ENCODE measurements at regions of chr10 and their contacts with region 1.

Region 1: DNA sequence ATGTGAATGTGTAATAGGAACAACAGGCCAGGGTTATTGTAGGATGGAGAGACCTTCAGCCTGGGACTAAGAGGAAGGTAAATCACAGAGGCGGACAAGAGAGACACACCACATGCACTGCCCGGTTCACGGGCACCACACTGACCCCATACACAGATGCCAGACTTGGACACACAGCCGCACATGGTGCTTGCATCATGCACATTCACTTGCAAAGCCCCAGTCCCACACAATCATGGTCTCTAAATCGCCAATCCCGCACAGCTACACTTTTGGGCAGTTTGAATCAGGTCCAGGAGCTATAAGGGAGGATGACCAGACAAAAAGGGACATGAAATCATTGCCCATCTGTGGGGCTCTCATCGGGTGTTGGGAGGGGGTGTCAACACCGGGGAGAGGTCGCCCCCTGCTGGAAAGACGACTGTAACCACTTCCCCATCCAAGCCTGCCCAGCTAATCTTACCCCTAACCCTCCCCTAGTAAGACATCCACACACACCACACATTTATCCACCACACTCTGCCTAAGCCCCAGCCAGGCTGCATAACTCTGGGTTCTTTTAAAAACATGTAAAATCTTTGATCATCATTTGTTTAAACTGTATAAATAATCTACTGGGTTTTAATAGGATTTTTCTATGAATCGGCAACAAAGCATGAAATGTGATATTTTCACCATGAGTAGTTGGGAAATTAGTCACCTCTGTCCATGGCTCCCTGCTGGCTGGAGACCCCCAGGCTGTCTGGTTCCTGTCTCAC is 40.5 kb upstream of the SLF2 start:
- DNase-seq: peak; percentile 68
- H3K4me3 ChIP-seq: no peak overlapping the region
- H3K27ac ChIP-seq: no peak overlapping the region
- H3K4me1 ChIP-seq: peaks cover under 1% of the 10 kb centered on the region
- H3K27me3 ChIP-seq: peaks cover 3% of the 10 kb centered on the region
- CTCF ChIP-seq: peak; percentile 87

Region 2: DNA sequence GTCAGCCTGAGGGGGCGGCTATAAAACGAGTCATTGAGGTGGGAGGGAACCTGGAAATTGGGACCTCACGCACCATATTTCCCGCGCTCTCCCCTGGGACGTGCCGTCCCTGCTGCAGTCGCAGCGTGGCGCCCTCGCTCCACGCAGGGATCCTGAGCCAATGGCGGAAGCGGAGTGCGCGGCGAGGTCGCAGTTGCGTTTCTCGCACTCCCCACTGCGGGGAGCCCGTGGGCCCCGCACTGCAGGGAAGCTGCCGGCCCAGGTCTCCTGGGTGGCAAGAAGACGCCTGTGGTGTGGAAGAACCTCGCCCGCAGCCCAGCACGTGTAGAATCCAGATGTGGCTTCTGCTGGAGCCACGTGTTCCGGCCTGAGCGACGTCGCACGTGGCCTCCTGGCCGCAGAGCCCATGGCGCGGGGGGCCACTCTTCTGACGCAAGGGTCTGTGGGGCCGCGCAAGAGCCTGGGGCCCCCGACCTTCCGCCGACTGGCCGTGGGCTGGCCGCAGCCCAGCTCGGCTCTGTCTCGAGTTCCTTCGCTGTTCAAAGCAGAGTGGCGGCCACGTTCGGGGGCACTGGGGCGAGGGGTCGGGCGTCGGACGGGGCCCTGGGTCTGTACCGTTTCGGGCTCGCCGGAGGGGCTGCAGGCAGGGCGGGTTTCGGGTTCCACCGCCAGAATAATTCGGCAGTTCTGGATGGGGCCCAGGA is 310.1 kb before region 1 on chr10:
- CTCF ChIA-PET with region 1: interaction called, 11 read pairs
- POLR2A ChIA-PET with region 1: no interaction called
- intact Hi-C with region 1: no loop called
- DNase-seq: peak; percentile 89
- H3K4me3 ChIP-seq: peak overlapping the region; percentile 15
- H3K27ac ChIP-seq: no peak overlapping the region
- H3K4me1 ChIP-seq: peaks cover 10% of the 10 kb centered on the region
- H3K27me3 ChIP-seq: peaks cover 15% of the 10 kb centered on the region
- CTCF ChIP-seq: peak; percentile 99

Region 3: DNA sequence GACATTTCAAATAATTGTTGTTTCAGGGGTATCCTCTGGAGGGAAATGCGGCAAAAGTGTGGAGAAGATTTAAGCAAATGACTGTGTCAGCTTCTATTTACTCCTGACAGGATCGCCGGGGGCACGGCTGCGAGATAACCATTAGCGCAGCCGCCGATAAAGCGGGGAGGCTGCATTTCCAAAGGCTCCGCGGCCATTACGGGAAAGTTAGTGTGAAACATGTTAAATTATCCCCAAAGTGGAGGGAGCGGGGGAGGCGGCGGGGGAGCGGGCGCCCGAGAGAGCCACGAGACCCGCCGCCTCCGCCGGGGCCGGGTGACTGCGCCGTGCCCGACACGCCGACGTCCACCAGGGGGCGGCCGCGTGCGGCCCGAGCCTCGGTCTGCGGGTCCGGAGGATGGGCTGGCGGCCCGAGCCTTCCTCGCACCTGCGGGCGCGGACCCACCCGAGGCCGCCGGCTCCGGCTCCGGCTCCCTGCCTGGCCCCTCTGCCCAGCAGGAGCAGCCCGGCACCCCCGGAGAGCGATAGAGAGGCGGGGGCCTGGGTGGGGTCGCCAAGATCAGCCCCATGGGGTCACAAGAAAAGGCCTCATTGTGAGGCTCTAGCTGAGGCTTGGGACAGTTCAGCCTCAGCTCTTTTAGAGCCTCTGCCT is 201.3 kb before region 1 on chr10:
- CTCF ChIA-PET with region 1: no interaction called
- POLR2A ChIA-PET with region 1: no interaction called
- intact Hi-C with region 1: loop called (anchors 5 kb)
- DNase-seq: no peak
- H3K4me3 ChIP-seq: no peak overlapping the region
- H3K27ac ChIP-seq: no peak overlapping the region
- H3K4me1 ChIP-seq: peaks cover 9% of the 10 kb centered on the region
- H3K27me3 ChIP-seq: peaks cover 42% of the 10 kb centered on the region
- CTCF ChIP-seq: peak; percentile 57

Region 4: GRCh38 chr10:100743626-100744135 is 128.5 kb before region 1 on chr10:
- CTCF ChIA-PET with region 1: interaction called, 9 read pairs
- POLR2A ChIA-PET with region 1: no interaction called
- intact Hi-C with region 1: loop called (anchors 5 kb)
- DNase-seq: peak; percentile 78
- H3K4me3 ChIP-seq: peak overlapping the region; percentile 36
- H3K27ac ChIP-seq: no peak overlapping the region
- H3K4me1 ChIP-seq: peaks cover 26% of the 10 kb centered on the region
- H3K27me3 ChIP-seq: peaks cover 100% of the 10 kb centered on the region
- CTCF ChIP-seq: peak; percentile 89

Measured in A673 (cell line).